ENCODE measurements at regions of chr3 and their contacts with region 1.

Region 1: DNA sequence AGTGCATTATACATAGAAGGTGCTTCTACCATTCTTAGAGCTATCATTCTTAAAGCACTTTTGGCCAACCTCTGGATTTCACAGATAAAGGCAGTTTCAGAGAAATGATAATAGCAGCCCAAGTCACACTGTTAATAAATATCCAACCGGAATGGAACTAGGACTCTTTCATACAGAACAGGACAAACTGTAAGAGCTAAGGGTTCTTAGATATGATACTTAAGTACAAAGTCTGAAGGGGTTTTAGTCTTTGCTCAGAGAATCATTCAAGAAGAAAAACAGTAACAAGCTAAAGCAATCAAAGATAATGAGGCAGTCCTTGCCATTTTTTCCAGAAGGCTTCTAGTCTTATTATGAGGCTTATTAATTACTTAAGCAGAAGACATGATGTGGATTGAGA is 239.0 kb downstream of the ERC2 start:
- DNase-seq: no peak
- H3K4me3 ChIP-seq: no peak overlapping the region
- H3K27ac ChIP-seq: no peak overlapping the region
- H3K4me1 ChIP-seq: no peaks in the 10 kb centered on the region
- H3K27me3 ChIP-seq: no peaks in the 10 kb centered on the region
- CTCF ChIP-seq: no peak
- EP300 ChIP-seq: no peak
- POLR2A ChIP-seq: no peak

Region 2: DNA sequence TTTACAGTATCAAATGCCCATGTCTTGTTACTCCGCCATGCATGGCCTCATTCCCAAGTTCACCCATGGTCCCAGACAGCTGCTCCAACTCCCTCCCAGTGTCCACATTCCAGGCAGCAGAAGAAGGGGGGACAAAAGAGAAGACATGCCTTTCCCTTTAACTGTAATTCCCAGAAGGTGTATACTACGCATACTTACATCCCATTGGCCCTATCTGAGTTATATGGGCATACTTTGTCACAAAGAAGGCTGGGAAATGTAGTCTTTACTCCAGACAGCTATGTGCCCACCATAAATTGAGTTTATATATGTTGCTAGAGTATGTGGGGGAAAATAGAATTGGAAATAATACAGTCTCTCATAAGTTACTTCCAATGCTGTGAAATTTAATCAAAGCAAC is 168.5 kb after region 1 on chr3:
- intact Hi-C with region 1: loop called in 1 of 4 experiments (anchors 5 kb)
- DNase-seq: no peak
- H3K4me3 ChIP-seq: no peak overlapping the region
- H3K27ac ChIP-seq: no peak overlapping the region
- H3K4me1 ChIP-seq: peaks cover 3% of the 10 kb centered on the region
- H3K27me3 ChIP-seq: no peaks in the 10 kb centered on the region
- CTCF ChIP-seq: no peak
- EP300 ChIP-seq: no peak
- POLR2A ChIP-seq: no peak

Region 3: GRCh38 chr3:56525291-56525690 is 296.0 kb after region 1 on chr3:
- intact Hi-C with region 1: no loop called
- DNase-seq: no peak
- H3K4me3 ChIP-seq: no peak overlapping the region
- H3K27ac ChIP-seq: no peak overlapping the region
- H3K4me1 ChIP-seq: no peaks in the 10 kb centered on the region
- H3K27me3 ChIP-seq: no peaks in the 10 kb centered on the region
- CTCF ChIP-seq: no peak
- EP300 ChIP-seq: no peak
- POLR2A ChIP-seq: no peak

Measured in ovary (tissue), 10 donors.